Left cardiac atrium (tissue), 4 donors: ENCODE measurements at regions of chr10 and their contacts with region 1.

Region 1: DNA sequence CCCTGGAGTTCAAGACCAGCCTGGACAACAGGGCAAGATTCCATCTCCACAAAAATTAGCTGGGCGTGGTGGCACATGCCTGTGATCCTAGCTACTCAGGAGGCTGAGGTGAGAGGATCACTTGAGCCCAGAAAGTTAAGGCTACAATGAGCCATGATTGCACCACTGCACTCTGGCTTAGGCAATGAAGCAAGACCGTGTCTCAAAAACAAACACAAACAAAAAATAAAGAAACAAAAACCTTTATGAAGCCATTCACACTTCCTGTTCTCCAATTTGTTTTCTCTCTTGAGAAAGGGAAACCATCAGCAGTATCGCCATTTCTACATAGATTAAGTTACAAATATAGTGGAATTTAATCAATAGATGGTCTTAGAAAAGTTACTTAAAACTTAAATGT is 19.8 kb downstream of the YME1L1 start:
- DNase-seq: no peak
- ATAC-seq: no peak

Region 2: GRCh38 chr10:27068217-27068891 is 66.0 kb before region 1 on chr10:
- intact Hi-C with region 1: loop called in 1 of 2 experiments (anchors 10 kb)
- DNase-seq: no peak
- ATAC-seq: no peak